Astrocyte of the cerebellum (primary cell): ENCODE measurements at regions of chr9 and their contacts with region 1.

Region 1: GRCh38 chr9:125601961-125602360 is 105.0 kb downstream of the MAPKAP1 start:
- DNase-seq: no peak
- H3K4me3 ChIP-seq: no peak overlapping the region
- CTCF ChIP-seq: peak; percentile 14

Region 2: GRCh38 chr9:125561509-125562217 is 40.3 kb before region 1 on chr9:
- in situ Hi-C with region 1: loop called (anchors 5 kb)
- DNase-seq: no peak
- H3K4me3 ChIP-seq: no peak overlapping the region
- CTCF ChIP-seq: no peak